Dorsolateral prefrontal cortex (tissue), 120 donors: ENCODE measurements at regions of chr7 and their contacts with region 1.

Region 1: DNA sequence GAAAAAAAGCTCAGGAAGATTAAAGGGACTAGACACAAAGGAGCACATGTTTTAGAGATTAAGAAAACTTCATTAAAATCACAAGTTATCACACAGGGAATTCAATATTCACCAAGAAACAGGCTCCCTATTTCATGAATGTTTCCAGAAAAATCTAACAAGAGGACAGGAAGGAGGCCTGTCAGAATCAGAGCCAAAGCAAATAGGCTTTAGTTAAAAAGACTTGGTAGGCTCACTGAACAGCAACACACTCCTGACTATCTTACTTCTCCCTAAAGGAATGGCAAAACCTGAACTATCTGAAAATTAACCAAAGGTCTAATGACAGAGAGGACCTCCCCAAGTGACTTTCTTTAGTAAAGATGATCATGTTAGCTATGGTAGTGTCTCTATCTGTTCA is 188.3 kb upstream of the MEOX2 start:
- DNase-seq: no peak
- H3K4me3 ChIP-seq: no peak overlapping the region
- H3K27ac ChIP-seq: no peak overlapping the region
- H3K27me3 ChIP-seq: no peaks in the 10 kb centered on the region
- CTCF ChIP-seq: no peak

Region 2: DNA sequence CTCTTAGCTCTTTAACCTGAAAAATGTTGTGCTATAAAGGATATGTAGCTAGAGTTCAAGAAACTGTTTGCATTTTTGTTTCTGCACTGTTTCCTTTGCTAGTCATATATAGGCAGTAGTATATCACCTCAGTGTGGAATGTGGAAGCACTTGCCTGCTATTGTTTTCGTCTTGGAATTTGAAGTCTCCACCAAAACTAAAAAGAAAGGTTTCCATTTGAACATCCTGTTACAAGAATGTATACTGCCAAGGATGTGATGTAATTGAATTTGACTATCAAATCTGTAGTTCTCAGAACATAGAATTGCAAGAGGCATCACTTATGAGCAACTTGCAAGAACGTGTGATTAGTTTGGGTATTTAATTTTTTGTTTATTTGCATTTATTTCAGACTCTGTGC is 137.2 kb before region 1 on chr7:
- intact Hi-C with region 1: loop called in 1 of 2 experiments (anchors 10 kb)
- DNase-seq: no peak
- H3K4me3 ChIP-seq: no peak overlapping the region
- H3K27ac ChIP-seq: no peak overlapping the region
- H3K27me3 ChIP-seq: no peaks in the 10 kb centered on the region
- CTCF ChIP-seq: no peak

Region 3: DNA sequence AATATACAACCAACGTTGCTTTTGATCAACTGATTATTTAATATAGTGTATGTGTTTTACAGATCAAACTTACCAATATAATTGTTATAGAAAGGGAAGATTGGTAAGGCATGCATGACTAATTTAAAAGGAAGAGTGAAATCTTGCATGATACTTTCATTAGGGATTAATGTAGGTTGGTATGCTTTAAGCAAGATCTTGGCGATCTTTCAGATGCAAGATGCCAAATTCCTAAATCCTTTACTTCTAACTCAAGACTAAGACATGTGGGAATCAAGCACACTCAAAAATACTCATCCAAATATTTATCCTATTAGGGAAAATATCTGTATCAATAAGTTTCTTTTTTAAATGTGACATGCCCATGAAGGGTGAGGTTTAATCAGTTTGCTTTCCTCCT is 133.1 kb after region 1 on chr7:
- intact Hi-C with region 1: no loop called
- DNase-seq: no peak
- H3K4me3 ChIP-seq: no peak overlapping the region
- H3K27ac ChIP-seq: no peak overlapping the region
- H3K27me3 ChIP-seq: no peaks in the 10 kb centered on the region
- CTCF ChIP-seq: no peak